ENCODE measurements at regions of chrX and their contacts with region 1.

Region 1: DNA sequence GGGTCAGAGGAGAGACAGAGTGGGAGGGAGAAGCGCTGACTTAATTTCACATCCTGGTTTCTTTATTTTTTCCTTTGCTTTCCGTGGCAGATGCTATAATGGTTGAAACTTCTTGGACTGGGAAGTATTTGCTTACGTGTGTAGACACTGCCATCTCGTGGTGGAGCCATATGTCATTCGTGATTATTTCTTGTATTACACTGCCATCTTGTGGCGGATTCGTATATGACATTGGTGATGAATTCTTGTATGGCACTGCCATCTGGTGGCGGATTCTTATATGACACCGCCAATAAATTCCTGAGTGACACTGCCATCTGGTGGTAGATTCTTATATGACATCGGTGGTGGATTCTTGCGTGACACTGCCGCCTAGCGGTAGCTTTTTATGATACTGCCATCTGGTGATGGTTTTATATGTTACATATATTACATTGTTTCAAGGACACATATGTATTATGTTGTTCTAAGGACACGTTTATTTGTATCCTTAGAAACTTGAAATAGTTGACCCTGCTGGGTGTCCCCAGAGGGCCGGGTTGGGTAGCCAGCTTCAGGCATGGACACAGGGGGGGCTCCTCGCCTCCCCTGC is 37.3 kb upstream of the CLCN4 start:
- DNase-seq: peak; percentile 82
- H3K4me3 ChIP-seq: no peak overlapping the region
- H3K27ac ChIP-seq: no peak overlapping the region
- H3K27me3 ChIP-seq: no peaks in the 10 kb centered on the region
- CTCF ChIP-seq: peak; percentile 94

Region 2: DNA sequence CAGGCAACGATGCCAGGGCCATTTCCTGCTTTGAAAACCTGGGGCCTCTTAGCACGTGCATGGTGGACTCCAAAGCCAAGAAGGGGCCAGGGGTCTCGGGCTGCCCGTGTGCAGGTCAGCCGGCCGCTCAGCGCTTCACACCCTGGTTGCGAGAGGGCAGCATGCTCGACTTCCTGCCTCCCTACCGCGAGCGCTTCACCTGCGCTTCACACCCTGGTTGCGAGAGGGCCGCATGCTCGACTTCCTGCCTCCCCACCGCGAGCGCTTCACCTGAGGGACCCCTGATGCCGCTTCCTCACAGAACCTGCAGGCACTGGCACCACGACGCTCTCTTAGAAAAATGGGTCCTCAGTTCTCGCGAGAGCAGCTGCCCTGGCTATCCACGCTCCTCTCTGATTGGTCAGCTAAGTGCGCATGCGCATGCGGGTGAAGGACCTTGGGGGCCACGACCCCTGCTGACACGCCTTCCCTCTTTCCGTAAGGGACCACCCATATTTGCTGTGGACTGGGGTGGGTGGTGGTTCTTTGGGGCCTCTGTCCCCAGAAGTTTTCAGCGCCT is 1318.4 kb before region 1 on chrX and contains the start of gene FAM9A:
- CTCF ChIA-PET with region 1: no interaction called
- POLR2A ChIA-PET with region 1: no interaction called
- DNase-seq: no peak
- H3K4me3 ChIP-seq: no peak within 1 kb of the TSS
- H3K27ac ChIP-seq: no peak within 1 kb of the TSS
- H3K27me3 ChIP-seq: no peaks in the 10 kb centered on the region
- CTCF ChIP-seq: no peak
- polyA plus RNA-seq, gene FAM9A: not detected in 2 replicates

Region 3: GRCh38 chrX:9562851-9563250 is 556.6 kb before region 1 on chrX:
- CTCF ChIA-PET with region 1: no interaction called
- POLR2A ChIA-PET with region 1: no interaction called
- DNase-seq: peak; percentile 71
- H3K4me3 ChIP-seq: no peak overlapping the region
- H3K27ac ChIP-seq: peak overlapping the region; percentile 52
- H3K27me3 ChIP-seq: no peaks in the 10 kb centered on the region
- CTCF ChIP-seq: no peak; the same call in 1 of the 2 replicates

Region 4: DNA sequence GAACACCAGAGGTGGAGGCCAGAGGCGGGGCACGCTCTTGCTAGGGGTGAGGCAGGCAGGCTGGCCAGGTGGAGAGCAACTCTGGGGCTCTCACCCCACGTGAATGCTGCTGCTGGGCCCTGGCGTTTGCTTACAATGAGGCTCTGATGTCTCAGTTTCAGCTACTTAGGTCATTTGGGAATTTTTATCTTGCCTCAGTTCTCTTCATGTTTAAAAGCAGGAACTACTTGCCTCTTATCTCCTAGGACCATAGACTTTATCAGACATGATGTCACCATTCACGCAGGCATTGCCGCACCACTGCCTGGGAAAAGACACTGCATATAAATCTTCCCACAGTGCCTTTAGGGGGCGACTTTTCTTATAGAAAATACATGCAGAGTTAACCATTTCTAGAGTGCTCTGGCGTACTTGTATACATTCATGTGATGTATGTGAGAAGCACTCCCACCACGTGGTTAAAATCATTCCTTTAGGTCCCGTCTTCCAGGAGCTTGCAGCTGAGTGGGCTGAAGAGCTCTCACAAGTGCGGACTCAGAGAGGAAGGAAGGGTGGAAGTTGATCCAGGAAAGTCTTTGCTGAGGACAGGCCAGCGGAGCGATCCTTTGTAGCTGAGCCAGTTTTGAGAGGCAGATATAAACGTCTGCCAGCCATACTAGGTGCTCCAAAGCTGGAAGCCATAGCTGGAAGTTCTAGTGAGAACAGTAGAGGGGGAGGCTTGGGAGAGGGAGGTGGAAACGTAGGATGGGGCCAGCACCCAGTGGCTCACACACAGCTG is 236.6 kb before region 1 on chrX:
- CTCF ChIA-PET with region 1: interaction called, 15 read pairs
- POLR2A ChIA-PET with region 1: no interaction called
- DNase-seq: no peak
- H3K4me3 ChIP-seq: no peak overlapping the region
- H3K27ac ChIP-seq: no peak overlapping the region
- H3K27me3 ChIP-seq: no peaks in the 10 kb centered on the region
- CTCF ChIP-seq: peak; percentile 25

Region 5: GRCh38 chrX:9988762-9989161 is 130.7 kb before region 1 on chrX:
- CTCF ChIA-PET with region 1: interaction called, 14 read pairs
- POLR2A ChIA-PET with region 1: no interaction called
- DNase-seq: no peak
- H3K4me3 ChIP-seq: no peak overlapping the region
- H3K27ac ChIP-seq: no peak overlapping the region
- H3K27me3 ChIP-seq: no peaks in the 10 kb centered on the region
- CTCF ChIP-seq: peak; percentile 52

Region 6: GRCh38 chrX:9995855-9996339 is 123.6 kb before region 1 on chrX:
- CTCF ChIA-PET with region 1: interaction called, 63 read pairs
- POLR2A ChIA-PET with region 1: no interaction called
- DNase-seq: peak; percentile 51
- H3K4me3 ChIP-seq: no peak overlapping the region
- H3K27ac ChIP-seq: no peak overlapping the region
- H3K27me3 ChIP-seq: no peaks in the 10 kb centered on the region
- CTCF ChIP-seq: peak; percentile 85

Region 7: DNA sequence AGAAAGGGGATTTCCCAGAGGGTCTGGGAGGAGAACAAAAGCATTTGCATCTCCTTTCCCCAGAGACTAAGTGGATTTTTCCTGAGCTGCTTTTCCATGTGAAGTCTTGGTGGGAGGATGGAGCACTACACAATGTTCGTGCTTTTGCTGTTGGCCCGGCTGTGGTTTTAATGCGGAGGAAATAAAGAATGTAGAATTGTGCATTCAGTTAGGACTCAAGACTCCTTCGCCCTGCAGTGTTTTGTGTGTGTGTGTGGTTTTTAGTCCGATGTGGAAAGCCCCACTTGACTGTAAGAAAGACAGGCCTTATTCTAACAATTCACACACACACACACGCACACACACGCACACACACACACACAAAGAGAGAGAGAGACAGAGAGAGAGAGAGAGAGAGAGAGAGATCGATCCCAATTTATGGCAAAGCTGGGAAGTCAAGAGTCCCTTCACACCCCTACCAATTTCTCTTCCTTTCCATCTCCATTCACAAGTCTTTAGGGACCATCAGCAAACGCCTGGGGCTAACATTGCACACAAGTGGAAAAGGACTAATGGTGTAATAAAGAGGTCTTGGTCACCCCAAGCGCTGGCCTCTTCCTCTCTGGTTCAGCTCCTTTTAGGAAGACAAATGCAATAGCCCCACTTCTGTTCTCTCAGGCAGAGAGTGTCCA is 108.1 kb before region 1 on chrX:
- CTCF ChIA-PET with region 1: interaction called, 16 read pairs
- POLR2A ChIA-PET with region 1: interaction called, 3 read pairs
- DNase-seq: no peak
- H3K4me3 ChIP-seq: no peak overlapping the region
- H3K27ac ChIP-seq: peak overlapping the region; percentile 31
- H3K27me3 ChIP-seq: no peaks in the 10 kb centered on the region
- CTCF ChIP-seq: no peak

Region 8: GRCh38 chrX:10259716-10260115 is 140.2 kb after region 1 on chrX:
- CTCF ChIA-PET with region 1: no interaction called
- POLR2A ChIA-PET with region 1: no interaction called
- DNase-seq: no peak
- H3K4me3 ChIP-seq: no peak overlapping the region
- H3K27ac ChIP-seq: no peak overlapping the region
- H3K27me3 ChIP-seq: no peaks in the 10 kb centered on the region
- CTCF ChIP-seq: no peak